Caco-2 (cell line): ENCODE measurements at regions of chr7 and their contacts with region 1.

Region 1: GRCh38 chr7:6323967-6324701 is 51.7 kb upstream of the CYTH3 start:
- DNase-seq: no peak
- H3K4me3 ChIP-seq: no peak overlapping the region
- H3K4me3 Mint-ChIP-seq: no peak overlapping the region
- H3K27ac Mint-ChIP-seq: no peak overlapping the region
- H3K4me1 ChIP-seq: no peaks in the 10 kb centered on the region
- H3K4me1 Mint-ChIP-seq: peaks cover 5% of the 10 kb centered on the region
- H3K27me3 ChIP-seq: no peaks in the 10 kb centered on the region
- H3K27me3 Mint-ChIP-seq: no peaks in the 10 kb centered on the region
- CTCF ChIP-seq: no peak

Region 2: GRCh38 chr7:6160191-6160623 is 163.9 kb before region 1 on chr7:
- CTCF ChIA-PET with region 1: interaction called, 5 read pairs
- POLR2A ChIA-PET with region 1: no interaction called
- intact Hi-C with region 1: loop called (anchors 1 kb)
- DNase-seq: peak in 1 of 2 experiments; percentile 65
- H3K4me3 ChIP-seq: no peak overlapping the region
- H3K4me3 Mint-ChIP-seq: no peak overlapping the region
- H3K27ac Mint-ChIP-seq: peak overlapping the region; percentile 23
- H3K4me1 ChIP-seq: no peaks in the 10 kb centered on the region
- H3K4me1 Mint-ChIP-seq: no peaks in the 10 kb centered on the region
- H3K27me3 ChIP-seq: no peaks in the 10 kb centered on the region
- H3K27me3 Mint-ChIP-seq: no peaks in the 10 kb centered on the region
- CTCF ChIP-seq: peak; percentile 38 to 65

Region 3: DNA sequence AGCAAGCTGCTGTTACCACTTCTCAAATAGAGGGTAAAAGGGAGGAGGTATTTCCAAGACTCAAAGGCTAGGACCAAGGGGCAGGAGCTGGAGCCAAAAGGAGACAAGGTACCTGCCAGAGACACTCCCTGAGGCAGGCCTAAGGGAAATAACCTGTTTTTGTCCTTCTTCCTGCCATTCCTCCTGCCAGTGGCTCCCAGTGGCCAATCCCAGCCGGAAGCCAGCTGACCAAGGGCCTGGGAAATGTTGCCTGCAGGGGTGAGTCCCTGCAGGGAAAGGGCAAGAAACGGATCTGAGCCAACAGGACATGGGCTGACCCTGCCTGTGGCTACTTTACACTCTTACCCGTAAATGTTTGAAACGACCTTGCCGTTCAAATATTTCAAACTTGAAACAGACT is 55.2 kb before region 1 on chr7:
- CTCF ChIA-PET with region 1: no interaction called
- POLR2A ChIA-PET with region 1: no interaction called
- intact Hi-C with region 1: loop called (anchors 5 kb)
- DNase-seq: peak; percentile 37 to 71
- H3K4me3 ChIP-seq: no peak overlapping the region
- H3K4me3 Mint-ChIP-seq: peak overlapping the region; percentile 68
- H3K27ac Mint-ChIP-seq: peak overlapping the region; percentile 90
- H3K4me1 ChIP-seq: peaks cover 51% of the 10 kb centered on the region
- H3K4me1 Mint-ChIP-seq: peaks cover 53% of the 10 kb centered on the region
- H3K27me3 ChIP-seq: no peaks in the 10 kb centered on the region
- H3K27me3 Mint-ChIP-seq: peaks cover 5% of the 10 kb centered on the region
- CTCF ChIP-seq: no peak

Region 4: DNA sequence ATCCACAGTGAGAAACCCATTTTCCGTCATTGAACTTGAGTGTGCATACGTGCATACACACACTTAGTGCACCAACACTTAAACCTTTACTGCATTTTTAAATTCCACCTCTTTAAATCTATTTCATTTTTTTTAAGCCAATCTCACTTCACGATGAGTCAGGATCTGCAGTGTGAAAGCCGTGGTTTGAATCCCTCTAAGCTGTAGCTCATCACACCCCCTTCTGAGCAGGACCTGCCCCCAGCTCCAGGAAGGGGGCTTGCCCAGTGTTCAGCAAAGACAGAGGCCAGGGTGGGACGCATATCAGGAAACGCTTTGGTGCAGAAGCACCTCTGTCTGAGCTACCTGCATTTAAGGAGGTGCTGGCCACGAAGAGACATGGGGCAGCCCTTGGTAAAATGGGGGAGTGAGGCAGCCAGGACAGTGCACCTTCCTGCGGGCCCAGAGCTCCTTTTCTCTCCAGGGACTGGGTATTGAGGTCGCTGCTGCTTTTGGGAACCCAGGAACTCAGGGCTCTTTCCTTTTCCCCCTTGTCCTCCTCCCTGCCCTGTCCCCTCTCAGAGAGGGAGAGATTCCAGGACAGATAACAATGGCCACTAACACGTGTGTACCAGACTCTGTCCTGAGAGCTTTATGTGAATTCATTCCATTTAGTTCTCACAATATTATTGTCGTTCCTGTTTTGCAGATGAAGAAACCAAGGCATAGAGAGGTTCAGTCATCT is 334.6 kb after region 1 on chr7:
- CTCF ChIA-PET with region 1: no interaction called
- POLR2A ChIA-PET with region 1: no interaction called
- intact Hi-C with region 1: no loop called
- DNase-seq: no peak
- H3K4me3 ChIP-seq: no peak overlapping the region
- H3K4me3 Mint-ChIP-seq: peak overlapping the region; percentile 42
- H3K27ac Mint-ChIP-seq: peak overlapping the region; percentile 29
- H3K4me1 ChIP-seq: no peaks in the 10 kb centered on the region
- H3K4me1 Mint-ChIP-seq: no peaks in the 10 kb centered on the region
- H3K27me3 ChIP-seq: no peaks in the 10 kb centered on the region
- H3K27me3 Mint-ChIP-seq: no peaks in the 10 kb centered on the region
- CTCF ChIP-seq: no peak